ENCODE measurements at regions of chr2 and their contacts with region 1.

Region 1: DNA sequence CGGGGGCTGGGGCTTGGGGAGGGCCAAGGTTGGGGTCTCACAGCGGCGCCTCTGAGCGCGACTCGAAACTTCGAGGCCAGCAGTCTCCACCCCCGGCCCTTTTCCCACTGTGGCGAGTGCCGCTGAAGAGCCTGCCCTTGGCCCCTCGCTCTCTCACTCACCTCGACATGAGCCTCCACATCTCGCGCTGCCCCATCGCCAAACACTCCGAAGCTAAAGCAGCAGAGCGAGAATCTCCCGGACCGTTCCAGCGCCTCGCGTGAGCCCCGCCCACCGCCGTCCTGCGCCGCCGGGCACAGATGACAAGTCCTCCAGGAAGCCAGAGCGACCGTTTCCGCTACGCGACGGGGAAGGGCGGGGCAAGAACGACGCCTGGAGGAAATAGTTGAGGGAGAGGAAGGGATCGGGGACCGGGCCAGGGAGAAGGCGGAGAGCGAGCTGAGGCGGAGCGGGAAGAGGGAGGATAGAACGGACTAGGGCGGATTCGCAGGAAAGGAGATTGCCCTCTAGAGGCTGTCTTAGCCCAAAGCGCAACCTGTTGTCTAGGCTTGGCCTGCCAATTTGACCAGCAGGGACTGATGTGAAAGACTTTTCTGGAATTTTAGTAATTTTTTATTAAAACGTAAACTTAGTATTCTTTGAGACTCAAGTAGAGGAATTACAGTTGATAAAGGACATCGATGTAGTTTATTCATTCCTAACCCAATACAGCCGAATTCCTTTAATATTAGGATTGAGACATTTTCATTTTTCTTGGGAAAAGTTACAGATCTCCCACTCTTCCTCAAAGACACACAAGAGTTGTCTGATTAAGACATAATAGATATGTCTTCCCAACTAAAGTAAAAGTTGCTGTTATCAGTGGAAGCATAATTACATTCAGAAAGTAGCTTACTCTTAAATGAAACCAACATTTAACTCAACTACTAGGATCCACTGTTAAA is at the start of gene HIBCH:
- DNase-seq: peak; percentile 71 to 87 (median 74)
- H3K4me3 ChIP-seq: peak within 1 kb of the TSS; percentile 62 to 75
- H3K4me3 Mint-ChIP-seq: peak within 1 kb of the TSS; percentile 96 to 100 (median 99)
- H3K27ac ChIP-seq: peak within 1 kb of the TSS; percentile 77
- H3K27ac Mint-ChIP-seq: peak within 1 kb of the TSS; percentile 90 to 100 (median 98)
- H3K4me1 ChIP-seq: peaks cover 22% of the 10 kb centered on the region
- H3K4me1 Mint-ChIP-seq: peaks cover 28 to 54% (median 43%) of the 10 kb centered on the region in 4 donors
- H3K27me3 ChIP-seq: no peaks in the 10 kb centered on the region
- H3K27me3 Mint-ChIP-seq: peaks cover 1 to 2% of the 10 kb centered on the region in 2 donors
- total RNA-seq, gene HIBCH: 20.0 to 22.3 TPM

Region 2: GRCh38 chr2:189440947-189441708 is 878.7 kb before region 1 on chr2 and contains the start of gene WDR75:
- CTCF ChIA-PET with region 1: no interaction called
- POLR2A ChIA-PET with region 1: interaction called, 3 read pairs
- intact Hi-C with region 1: loop called (anchors 10 kb)
- DNase-seq: peak; percentile 93 to 96 (median 95)
- H3K4me3 ChIP-seq: peak within 1 kb of the TSS; percentile 87 to 99
- H3K4me3 Mint-ChIP-seq: peak within 1 kb of the TSS in 6 of 8 donors; percentile 98 to 100 (median 100)
- H3K27ac ChIP-seq: peak within 1 kb of the TSS; percentile 89
- H3K27ac Mint-ChIP-seq: peak within 1 kb of the TSS; percentile 97 to 100 (median 100)
- H3K4me1 ChIP-seq: peaks cover 49% of the 10 kb centered on the region
- H3K4me1 Mint-ChIP-seq: peaks cover 0 to 18% (median 11%) of the 10 kb centered on the region in 4 donors
- H3K27me3 ChIP-seq: no peaks in the 10 kb centered on the region
- H3K27me3 Mint-ChIP-seq: no peaks in the 10 kb centered on the region
- total RNA-seq, gene WDR75: 60.8 to 61.4 TPM

Region 3: DNA sequence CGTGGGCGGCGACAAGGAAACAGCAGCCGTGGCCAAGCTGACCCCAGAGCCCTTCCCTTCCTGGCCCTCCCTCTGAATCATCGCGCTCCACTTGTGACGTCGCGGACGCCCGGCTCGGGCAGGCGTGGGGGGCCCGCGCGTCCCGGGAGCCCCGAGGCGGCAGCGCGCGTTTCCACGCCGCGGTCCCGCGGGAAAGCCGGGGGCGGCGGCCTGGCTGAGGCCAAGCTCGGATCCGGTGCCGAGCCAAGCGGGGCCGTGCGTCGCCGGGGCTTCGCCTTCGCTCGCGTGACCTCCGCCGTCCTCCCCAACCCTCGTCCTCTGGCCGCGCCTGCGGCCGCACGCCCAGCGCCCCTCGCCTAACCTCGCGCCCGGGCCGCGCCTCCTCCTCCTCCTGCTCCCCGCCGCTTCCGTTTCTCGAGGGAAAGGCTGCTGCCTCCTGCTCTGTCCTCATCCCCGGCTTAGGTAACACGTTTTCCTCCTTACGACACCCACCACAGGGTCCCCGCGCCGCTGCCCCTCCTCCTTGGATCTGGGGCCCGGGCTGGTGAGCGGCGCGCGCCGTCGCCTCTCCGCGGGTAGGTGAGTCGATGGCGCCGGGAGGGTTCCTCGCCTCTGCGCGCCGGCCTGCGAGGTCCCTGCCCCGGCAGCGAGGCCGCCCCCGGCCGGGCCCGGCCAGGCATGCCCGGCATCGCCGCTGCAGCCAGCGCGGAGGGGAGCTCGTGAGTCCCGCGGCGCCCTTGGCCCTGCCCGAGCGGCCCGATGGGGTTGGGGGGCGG is 23.9 kb after region 1 on chr2 and contains the start of gene INPP1:
- CTCF ChIA-PET with region 1: interaction called, 18 read pairs
- POLR2A ChIA-PET with region 1: interaction called, 13 read pairs
- intact Hi-C with region 1: loop called (anchors 1 kb)
- DNase-seq: peak; percentile 28 to 45 (median 41)
- H3K4me3 ChIP-seq: peak within 1 kb of the TSS; percentile 28 to 45
- H3K4me3 Mint-ChIP-seq: peak within 1 kb of the TSS; percentile 90 to 99 (median 92)
- H3K27ac ChIP-seq: no peak within 1 kb of the TSS
- H3K27ac Mint-ChIP-seq: peak within 1 kb of the TSS in 6 of 7 donors; percentile 48 to 93 (median 88)
- H3K4me1 ChIP-seq: peaks cover 14% of the 10 kb centered on the region
- H3K4me1 Mint-ChIP-seq: peaks cover 9 to 20% (median 13%) of the 10 kb centered on the region in 4 donors
- H3K27me3 ChIP-seq: no peaks in the 10 kb centered on the region
- H3K27me3 Mint-ChIP-seq: no peaks in the 10 kb centered on the region
- total RNA-seq, gene INPP1: 3.2 to 3.7 TPM

Region 4: DNA sequence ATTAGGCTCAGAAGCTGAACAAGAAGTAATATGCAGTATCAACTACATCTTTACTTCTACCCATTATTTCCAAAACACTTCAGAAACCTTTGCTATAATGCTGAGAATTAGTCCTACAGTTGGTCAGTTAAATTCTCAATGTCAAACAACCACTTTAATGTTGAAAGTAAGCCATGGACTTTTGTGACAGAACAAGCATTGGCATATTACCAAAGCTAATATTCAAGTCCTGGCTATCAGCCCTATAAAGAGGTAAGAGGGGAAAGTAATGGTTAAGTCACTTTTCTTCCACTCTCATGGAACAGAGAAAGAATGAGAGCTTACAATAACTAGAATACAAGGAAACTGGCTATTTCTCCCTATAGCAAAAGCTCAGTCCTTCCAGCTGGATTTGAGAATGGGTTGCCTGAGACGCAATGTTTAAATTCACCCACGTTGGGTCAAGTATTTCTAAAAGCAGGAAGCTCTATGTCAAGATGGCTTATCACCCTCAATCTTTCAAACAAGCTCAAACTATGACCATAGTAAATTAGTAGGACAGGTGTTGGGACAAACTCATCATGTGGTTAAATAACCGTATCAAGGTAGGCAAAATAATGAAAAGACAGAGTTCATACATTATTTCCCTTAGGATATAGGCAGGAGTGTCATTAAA is 56.9 kb after region 1 on chr2:
- CTCF ChIA-PET with region 1: no interaction called
- POLR2A ChIA-PET with region 1: no interaction called
- intact Hi-C with region 1: loop called (anchors 1 kb)
- DNase-seq: no peak
- H3K4me3 ChIP-seq: no peak overlapping the region
- H3K4me3 Mint-ChIP-seq: no peak overlapping the region
- H3K27ac ChIP-seq: no peak overlapping the region
- H3K27ac Mint-ChIP-seq: no peak overlapping the region
- H3K4me1 ChIP-seq: no peaks in the 10 kb centered on the region
- H3K4me1 Mint-ChIP-seq: peaks cover 0 to 2% (median 0%) of the 10 kb centered on the region in 4 donors
- H3K27me3 ChIP-seq: no peaks in the 10 kb centered on the region
- H3K27me3 Mint-ChIP-seq: no peaks in the 10 kb centered on the region

Region 5: DNA sequence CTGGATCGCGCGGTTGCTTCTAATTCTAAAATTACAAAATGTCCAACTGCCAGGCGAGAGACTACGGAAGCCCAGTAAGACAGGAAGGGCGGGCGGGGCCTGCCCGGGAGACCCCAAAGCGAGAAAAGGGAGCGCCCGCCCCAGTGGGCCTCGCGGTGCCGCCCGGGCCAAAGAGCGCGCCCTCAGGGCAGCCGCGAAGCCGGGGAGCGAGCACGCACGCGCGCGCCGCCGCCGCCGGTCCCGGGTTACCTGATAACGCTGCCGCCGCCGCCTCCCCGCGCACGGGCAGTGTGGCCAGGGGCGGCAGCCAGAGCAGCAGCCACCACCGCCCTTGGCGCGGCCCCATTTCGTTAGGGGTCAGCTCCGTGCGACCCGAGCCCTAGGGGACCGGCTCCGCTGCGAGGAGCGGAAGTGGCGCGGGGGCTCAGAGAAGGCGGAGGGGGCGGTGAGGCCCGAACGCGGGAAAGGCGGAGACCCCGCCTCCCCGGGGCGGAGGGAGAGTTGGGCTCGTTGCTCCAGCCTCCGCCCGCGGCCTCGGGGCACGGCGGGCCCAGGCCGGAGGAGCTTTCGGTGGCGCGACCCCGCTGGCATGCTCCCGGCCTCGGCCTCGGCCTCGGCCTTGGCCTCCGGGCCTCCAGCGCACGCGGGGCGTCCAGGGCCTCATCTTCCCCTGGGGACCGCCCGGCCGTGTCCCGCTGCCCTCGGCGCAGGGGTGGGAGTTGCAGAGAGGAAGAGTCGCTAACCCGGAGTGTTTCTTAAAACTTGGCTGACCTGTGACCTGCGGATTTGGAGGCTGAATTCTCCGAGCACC is 214.7 kb after region 1 on chr2 and contains the start of gene NEMP2:
- CTCF ChIA-PET with region 1: no interaction called
- POLR2A ChIA-PET with region 1: interaction called, 8 read pairs
- intact Hi-C with region 1: loop called (anchors 5 kb)
- DNase-seq: peak; percentile 75 to 87 (median 81)
- H3K4me3 ChIP-seq: peak within 1 kb of the TSS; percentile 82 to 89
- H3K4me3 Mint-ChIP-seq: peak within 1 kb of the TSS; percentile 94 to 99 (median 98)
- H3K27ac ChIP-seq: peak within 1 kb of the TSS; percentile 87
- H3K27ac Mint-ChIP-seq: peak within 1 kb of the TSS; percentile 99 to 100 (median 100)
- H3K4me1 ChIP-seq: peaks cover 46% of the 10 kb centered on the region
- H3K4me1 Mint-ChIP-seq: peaks cover 42 to 66% (median 52%) of the 10 kb centered on the region in 4 donors
- H3K27me3 ChIP-seq: no peaks in the 10 kb centered on the region
- H3K27me3 Mint-ChIP-seq: no peaks in the 10 kb centered on the region
- total RNA-seq, gene NEMP2: 20.7 to 21.2 TPM

Measured in CD4-positive, alpha-beta memory T cell (primary cell).